CD14-positive monocyte (primary cell): ENCODE measurements at regions of chr1 and their contacts with region 1.

Region 1: DNA sequence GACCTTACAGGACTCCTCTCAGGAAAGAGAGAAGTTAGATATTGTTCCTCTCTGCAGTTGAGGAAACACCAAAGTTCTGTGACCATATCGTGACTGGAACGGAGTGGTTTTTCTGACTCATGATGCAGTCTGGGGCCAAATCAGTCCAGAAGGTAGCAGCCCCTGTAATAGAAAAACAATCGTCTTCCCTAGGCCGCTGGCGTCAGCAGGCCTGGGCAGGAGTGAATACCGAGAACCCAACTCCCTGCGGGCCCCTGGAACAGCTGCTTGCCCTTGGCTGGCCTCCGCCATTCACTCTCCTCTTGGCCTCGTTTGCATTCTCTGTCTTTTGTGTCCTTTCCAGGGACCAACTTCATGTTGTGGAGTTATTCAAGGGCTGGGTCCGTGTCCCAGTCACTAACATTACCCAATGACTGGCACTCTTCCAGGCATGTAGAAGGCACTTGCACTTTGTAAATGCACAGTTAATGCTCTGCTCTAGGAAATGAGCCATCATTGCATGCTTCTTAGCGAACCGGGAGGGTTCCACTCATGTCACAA is 10.9 kb upstream of the CD101 start:
- DNase-seq: peak; percentile 87 to 97 (median 94)
- H3K4me3 ChIP-seq: peak overlapping the region in 1 of 3 experiments; percentile 26
- H3K4me3 Mint-ChIP-seq: peak overlapping the region; percentile 18 to 68
- H3K27ac ChIP-seq: peak overlapping the region; percentile 96 to 97
- H3K27ac Mint-ChIP-seq: peak overlapping the region; percentile 92 to 99 (median 97)
- H3K4me1 ChIP-seq: peaks cover 72 to 75% of the 10 kb centered on the region in 2 donors
- H3K4me1 Mint-ChIP-seq: peaks cover 89% of the 10 kb centered on the region
- H3K27me3 ChIP-seq: no peaks in the 10 kb centered on the region
- H3K27me3 Mint-ChIP-seq: peaks cover 0 to 8% (median 1%) of the 10 kb centered on the region in 3 donors
- CTCF ChIP-seq: no peak

Region 2: DNA sequence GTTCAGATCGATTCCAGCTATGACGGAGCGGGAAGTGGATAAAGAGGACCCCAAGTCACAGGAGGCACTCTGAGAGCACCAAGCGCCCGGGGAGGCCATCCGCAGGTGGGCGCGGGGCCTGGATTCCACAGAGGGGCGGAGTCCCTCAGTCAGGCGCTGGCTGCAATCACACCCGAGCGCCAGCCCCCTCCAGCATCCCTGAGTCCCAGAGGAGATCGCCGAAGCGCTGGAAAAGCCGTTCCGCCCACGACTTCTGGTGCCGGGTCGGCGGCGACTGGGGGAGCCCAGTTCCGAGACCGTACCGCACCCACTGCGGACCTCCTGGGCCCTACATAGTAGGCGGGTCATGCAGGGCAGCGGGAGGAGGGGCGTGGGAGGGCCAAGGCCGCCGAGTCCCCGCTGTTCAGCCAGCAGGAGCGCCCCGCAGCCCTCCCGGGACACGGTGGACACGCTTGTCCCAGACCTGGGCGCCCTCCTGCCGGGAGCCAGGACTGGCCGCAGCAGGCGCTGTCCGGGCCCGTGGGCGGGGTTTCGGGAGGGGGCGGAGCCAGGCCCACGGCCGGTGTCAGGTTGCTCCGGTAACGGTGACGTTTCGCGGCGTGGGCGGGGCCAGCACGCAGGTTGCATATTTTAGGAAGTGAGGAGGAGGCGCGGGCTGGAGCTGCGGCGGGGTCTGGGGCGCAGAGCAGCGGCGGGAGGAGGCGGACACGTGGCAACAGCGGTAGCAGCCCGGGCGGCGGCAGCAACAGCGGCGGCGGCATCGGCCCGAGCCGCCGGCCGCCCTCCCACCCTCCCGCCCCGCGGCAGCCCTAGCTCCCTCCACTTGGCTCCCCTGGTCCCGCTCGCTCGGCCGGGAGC is 617.9 kb before region 1 on chr1 and contains the start of gene ATP1A1:
- intact Hi-C with region 1: loop called in 1 of 2 experiments (anchors 10 kb)
- DNase-seq: peak; percentile 95 to 98 (median 98)
- H3K4me3 ChIP-seq: peak within 1 kb of the TSS; percentile 68 to 93 (median 76)
- H3K4me3 Mint-ChIP-seq: peak within 1 kb of the TSS; percentile 94 to 96
- H3K27ac ChIP-seq: peak within 1 kb of the TSS; percentile 85 to 97
- H3K27ac Mint-ChIP-seq: peak within 1 kb of the TSS; percentile 86 to 98 (median 94)
- H3K4me1 ChIP-seq: peaks cover 52 to 55% of the 10 kb centered on the region in 2 donors
- H3K4me1 Mint-ChIP-seq: peaks cover 49% of the 10 kb centered on the region
- H3K27me3 ChIP-seq: no peaks in the 10 kb centered on the region
- H3K27me3 Mint-ChIP-seq: peaks cover 5 to 11% (median 5%) of the 10 kb centered on the region in 3 donors
- CTCF ChIP-seq: no peak
- polyA plus RNA-seq, gene ATP1A1: 32.3 to 135 (median 32.7) TPM

Region 3: DNA sequence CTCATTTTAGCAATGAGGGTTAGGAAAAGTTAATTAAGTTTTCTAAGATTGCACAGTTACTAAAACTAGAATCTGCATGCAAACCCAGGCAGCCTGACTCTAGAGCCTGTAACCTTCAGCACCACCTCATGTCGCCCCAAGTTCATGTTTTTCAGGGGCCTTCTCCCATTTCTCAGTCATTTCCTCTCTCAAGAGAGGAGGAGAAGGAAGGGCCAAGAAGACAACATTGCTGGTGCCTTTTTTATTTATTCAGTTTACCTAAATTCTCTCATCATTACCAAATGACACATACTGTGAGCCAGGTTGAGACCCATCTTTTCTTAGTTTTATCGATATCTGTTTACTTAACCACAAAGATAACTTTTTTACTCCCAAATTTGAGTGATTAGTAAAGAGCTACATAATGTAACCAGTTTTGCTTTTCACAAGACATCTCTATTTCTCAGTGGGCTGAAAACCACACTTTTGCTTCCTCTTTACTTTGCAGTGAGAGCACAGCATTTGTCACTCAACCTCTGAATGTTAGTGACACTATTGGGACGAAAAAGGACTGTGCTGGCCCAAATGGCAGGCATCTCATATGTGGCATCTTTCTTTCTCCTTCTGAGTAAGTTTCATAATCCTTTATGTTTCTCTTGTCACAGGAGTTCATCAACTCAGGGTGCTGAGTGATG is 10.7 kb after region 1 on chr1 and contains the start of gene CD101:
- intact Hi-C with region 1: loop called in 1 of 2 experiments (anchors 1 kb)
- DNase-seq: peak; percentile 76 to 89 (median 80)
- H3K4me3 ChIP-seq: peak within 1 kb of the TSS; percentile 31 to 75 (median 40)
- H3K4me3 Mint-ChIP-seq: peak within 1 kb of the TSS; percentile 39 to 87
- H3K27ac ChIP-seq: peak within 1 kb of the TSS; percentile 57 to 92
- H3K27ac Mint-ChIP-seq: peak within 1 kb of the TSS; percentile 91 to 99 (median 94)
- H3K4me1 ChIP-seq: peaks cover 65 to 91% of the 10 kb centered on the region in 2 donors
- H3K4me1 Mint-ChIP-seq: peaks cover 82% of the 10 kb centered on the region
- H3K27me3 ChIP-seq: no peaks in the 10 kb centered on the region
- H3K27me3 Mint-ChIP-seq: peaks cover 0 to 7% (median 2%) of the 10 kb centered on the region in 3 donors
- CTCF ChIP-seq: no peak
- polyA plus RNA-seq, gene CD101: 27.2 to 101 (median 54.7) TPM

Region 4: DNA sequence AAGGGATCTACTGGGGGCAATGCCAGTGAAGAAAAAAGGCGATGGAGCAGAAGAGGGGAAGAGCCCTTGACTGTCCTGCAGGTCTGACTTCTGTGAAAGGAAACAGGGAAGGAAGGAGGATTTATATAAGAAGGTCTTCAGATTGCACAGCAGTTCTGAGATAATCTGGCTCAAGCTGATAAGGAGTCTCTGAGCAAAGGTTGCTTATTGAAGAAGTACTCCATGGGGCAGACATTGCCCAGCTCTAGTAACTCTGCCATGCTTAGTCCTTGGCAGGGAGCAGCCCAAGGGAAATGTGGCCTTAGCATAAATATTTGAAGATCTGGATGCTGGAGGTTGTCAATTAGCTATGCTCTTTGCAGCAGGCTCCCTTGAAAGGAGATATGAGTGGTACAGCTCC is 53.5 kb after region 1 on chr1:
- intact Hi-C with region 1: no loop called
- DNase-seq: no peak
- H3K4me3 ChIP-seq: no peak overlapping the region
- H3K4me3 Mint-ChIP-seq: no peak overlapping the region
- H3K27ac ChIP-seq: no peak overlapping the region
- H3K27ac Mint-ChIP-seq: no peak overlapping the region
- H3K4me1 ChIP-seq: peaks cover 14% of the 10 kb centered on the region in 2 donors
- H3K4me1 Mint-ChIP-seq: peaks cover 23% of the 10 kb centered on the region
- H3K27me3 ChIP-seq: no peaks in the 10 kb centered on the region
- H3K27me3 Mint-ChIP-seq: peaks cover 0 to 4% (median 3%) of the 10 kb centered on the region in 3 donors
- CTCF ChIP-seq: no peak